ENCODE measurements at regions of chr11 and their contacts with region 1.

Region 1: DNA sequence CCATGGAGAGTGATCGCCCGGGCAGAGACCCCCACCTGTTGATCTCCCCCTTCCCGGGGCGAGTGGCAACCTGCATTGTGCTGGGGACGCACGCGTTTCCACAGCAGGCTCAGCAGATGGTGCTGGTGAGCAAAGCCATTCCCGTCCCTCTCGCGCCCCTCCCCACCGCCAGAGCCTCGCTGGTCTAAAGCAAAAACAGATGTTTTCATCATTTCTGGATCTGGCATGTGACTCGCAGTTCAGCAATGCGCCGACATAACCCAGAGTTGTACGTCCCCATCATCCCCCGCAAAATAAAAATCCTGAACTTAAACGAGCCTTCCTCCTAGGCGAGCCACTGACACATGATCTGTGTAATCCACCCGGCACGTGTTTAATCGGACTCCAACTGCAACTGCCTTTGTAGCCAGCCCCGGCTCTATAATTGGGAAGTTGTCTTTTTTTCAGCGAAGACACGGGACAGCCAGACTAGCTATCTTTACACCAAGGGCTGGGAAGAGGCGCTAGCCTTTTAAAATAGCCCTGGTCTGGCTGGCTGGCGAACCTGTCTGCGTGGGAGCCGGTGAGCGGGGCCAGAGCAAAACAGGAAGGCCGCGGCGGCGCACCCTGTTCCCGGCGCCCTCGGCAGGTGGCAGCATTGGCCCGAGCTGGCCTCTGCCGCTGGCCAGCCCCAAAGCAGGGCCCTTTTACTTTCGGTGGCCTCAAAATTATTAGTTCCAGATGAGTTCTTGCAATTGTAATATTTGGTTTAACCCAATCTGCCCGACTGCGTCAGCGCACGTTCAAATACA is 203.0 kb upstream of the SORL1-AS1 start:
- DNase-seq: peak; percentile 85
- ATAC-seq: peak; percentile 88
- H3K4me3 Mint-ChIP-seq: peak overlapping the region; percentile 70
- H3K27ac Mint-ChIP-seq: peak overlapping the region; percentile 66
- H3K4me1 Mint-ChIP-seq: peaks cover 19% of the 10 kb centered on the region
- H3K27me3 Mint-ChIP-seq: peaks cover 2% of the 10 kb centered on the region

Region 2: DNA sequence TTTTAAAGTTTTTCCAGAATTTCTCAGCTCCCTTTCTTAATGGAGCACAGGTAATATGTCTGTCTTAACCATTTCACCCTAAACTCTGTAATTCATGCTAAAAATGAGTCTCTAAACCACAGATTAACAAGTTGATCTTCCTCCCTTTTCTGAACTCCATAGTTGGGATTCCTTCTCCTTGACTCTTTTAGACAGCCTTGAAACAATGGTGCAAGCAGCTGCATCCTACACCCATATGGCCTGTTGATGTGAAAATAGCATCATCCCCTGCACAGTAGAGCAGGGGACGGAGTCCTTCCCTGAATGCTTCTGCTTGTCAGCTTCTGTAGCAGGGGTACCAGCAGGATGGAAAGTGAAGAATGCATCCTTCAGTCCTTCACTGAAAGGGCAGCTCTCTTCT is 10.1 kb before region 1 on chr11:
- CTCF ChIA-PET with region 1: interaction called, 10 read pairs
- POLR2A ChIA-PET with region 1: no interaction called
- intact Hi-C with region 1: no loop called
- DNase-seq: no peak
- ATAC-seq: no peak
- H3K4me3 Mint-ChIP-seq: no peak overlapping the region
- H3K27ac Mint-ChIP-seq: no peak overlapping the region
- H3K4me1 Mint-ChIP-seq: peaks cover 11% of the 10 kb centered on the region
- H3K27me3 Mint-ChIP-seq: no peaks in the 10 kb centered on the region

Region 3: DNA sequence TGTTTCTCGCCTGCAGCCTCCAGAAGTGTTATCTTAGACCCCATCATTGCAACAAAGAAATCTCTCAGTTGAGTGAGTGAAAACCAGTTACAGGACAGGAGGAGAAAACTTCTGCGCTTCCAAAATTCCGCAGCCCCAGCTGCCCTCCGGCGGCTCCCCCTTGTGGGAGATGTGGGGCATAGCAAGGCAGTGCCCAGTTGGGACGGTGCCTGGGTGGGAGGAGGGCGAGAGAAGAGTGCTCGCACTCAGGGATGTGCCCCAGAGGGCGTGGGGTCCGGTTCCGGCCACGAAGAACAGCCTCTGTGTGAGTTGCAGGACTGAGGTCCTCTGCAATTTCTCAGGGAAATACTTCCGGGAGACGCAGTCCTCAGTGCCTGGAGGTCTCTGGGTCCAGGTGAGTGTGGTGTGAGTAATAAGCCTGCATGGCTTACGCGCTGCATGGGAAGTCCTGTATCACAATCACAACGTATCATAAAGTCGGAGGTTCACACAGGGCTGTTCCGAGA is 547.3 kb after region 1 on chr11:
- CTCF ChIA-PET with region 1: interaction called, 3 read pairs
- POLR2A ChIA-PET with region 1: no interaction called
- intact Hi-C with region 1: loop called (anchors 1 kb)
- DNase-seq: peak; percentile 69
- ATAC-seq: peak; percentile 74
- H3K4me3 Mint-ChIP-seq: no peak overlapping the region
- H3K27ac Mint-ChIP-seq: no peak overlapping the region
- H3K4me1 Mint-ChIP-seq: no peaks in the 10 kb centered on the region
- H3K27me3 Mint-ChIP-seq: peaks cover 34% of the 10 kb centered on the region

Region 4: GRCh38 chr11:122505304-122506006 is 849.7 kb after region 1 on chr11:
- CTCF ChIA-PET with region 1: interaction called, 7 read pairs
- POLR2A ChIA-PET with region 1: no interaction called
- intact Hi-C with region 1: loop called (anchors 1 to 2 kb)
- DNase-seq: peak; percentile 78
- ATAC-seq: peak; percentile 77
- H3K4me3 Mint-ChIP-seq: no peak overlapping the region
- H3K27ac Mint-ChIP-seq: no peak overlapping the region
- H3K4me1 Mint-ChIP-seq: no peaks in the 10 kb centered on the region
- H3K27me3 Mint-ChIP-seq: peaks cover 33% of the 10 kb centered on the region

Measured in activated CD4-positive, alpha-beta T cell treated with anti-CD3 and anti-CD28 coated beads for 36 hours (primary cell).